ENCODE measurements at regions of chr9 and their contacts with region 1.

Region 1: GRCh38 chr9:104968025-104968982 is 40.3 kb upstream of the ABCA1 start:
- DNase-seq: peak; percentile 77 to 91 (median 88)
- ATAC-seq: peak; percentile 98
- H3K4me3 ChIP-seq: peak overlapping the region; percentile 80 to 86
- H3K4me3 Mint-ChIP-seq: peak overlapping the region; percentile 91
- H3K27ac ChIP-seq: peak overlapping the region; percentile 11 to 47
- H3K27ac Mint-ChIP-seq: peak overlapping the region; percentile 73
- H3K4me1 ChIP-seq: peaks cover 14% of the 10 kb centered on the region
- H3K4me1 Mint-ChIP-seq: peaks cover 13% of the 10 kb centered on the region
- H3K27me3 ChIP-seq: peaks cover 0 to 4% of the 10 kb centered on the region in 2 experiments
- H3K27me3 Mint-ChIP-seq: peaks cover 5% of the 10 kb centered on the region
- CTCF ChIP-seq: no peak

Region 2: GRCh38 chr9:104093647-104094533 is 874.4 kb before region 1 on chr9 and contains the start of gene SMC2:
- CTCF ChIA-PET with region 1: no interaction called
- POLR2A ChIA-PET with region 1: no interaction called
- intact Hi-C with region 1: loop called in 1 of 2 experiments (anchors 10 kb)
- DNase-seq: peak; percentile 90 to 96 (median 94)
- ATAC-seq: peak; percentile 96
- H3K4me3 ChIP-seq: peak within 1 kb of the TSS; percentile 58 to 79
- H3K4me3 Mint-ChIP-seq: peak within 1 kb of the TSS; percentile 98
- H3K27ac ChIP-seq: peak within 1 kb of the TSS; percentile 78 to 98
- H3K27ac Mint-ChIP-seq: peak within 1 kb of the TSS; percentile 98
- H3K4me1 ChIP-seq: peaks cover 21% of the 10 kb centered on the region
- H3K4me1 Mint-ChIP-seq: peaks cover 44% of the 10 kb centered on the region
- H3K27me3 ChIP-seq: no peaks in the 10 kb centered on the region
- H3K27me3 Mint-ChIP-seq: no peaks in the 10 kb centered on the region
- CTCF ChIP-seq: no peak
- total RNA-seq, gene SMC2: 1.9 to 2.0 TPM

Region 3: GRCh38 chr9:104927912-104928740 is 40.2 kb before region 1 on chr9 and contains the start of gene ABCA1:
- CTCF ChIA-PET with region 1: no interaction called
- POLR2A ChIA-PET with region 1: no interaction called
- intact Hi-C with region 1: loop called (anchors 1 kb)
- DNase-seq: peak; percentile 42 to 87 (median 65)
- ATAC-seq: peak; percentile 78
- H3K4me3 ChIP-seq: peak within 1 kb of the TSS; percentile 56 to 71
- H3K4me3 Mint-ChIP-seq: peak within 1 kb of the TSS; percentile 91
- H3K27ac ChIP-seq: no peak within 1 kb of the TSS
- H3K27ac Mint-ChIP-seq: peak within 1 kb of the TSS; percentile 80
- H3K4me1 ChIP-seq: peaks cover 19% of the 10 kb centered on the region
- H3K4me1 Mint-ChIP-seq: peaks cover 15% of the 10 kb centered on the region
- H3K27me3 ChIP-seq: peaks cover 0 to 24% of the 10 kb centered on the region in 2 experiments
- H3K27me3 Mint-ChIP-seq: peaks cover 11% of the 10 kb centered on the region
- CTCF ChIP-seq: no peak
- total RNA-seq, gene ABCA1: 11.2 to 11.4 TPM

Region 4: DNA sequence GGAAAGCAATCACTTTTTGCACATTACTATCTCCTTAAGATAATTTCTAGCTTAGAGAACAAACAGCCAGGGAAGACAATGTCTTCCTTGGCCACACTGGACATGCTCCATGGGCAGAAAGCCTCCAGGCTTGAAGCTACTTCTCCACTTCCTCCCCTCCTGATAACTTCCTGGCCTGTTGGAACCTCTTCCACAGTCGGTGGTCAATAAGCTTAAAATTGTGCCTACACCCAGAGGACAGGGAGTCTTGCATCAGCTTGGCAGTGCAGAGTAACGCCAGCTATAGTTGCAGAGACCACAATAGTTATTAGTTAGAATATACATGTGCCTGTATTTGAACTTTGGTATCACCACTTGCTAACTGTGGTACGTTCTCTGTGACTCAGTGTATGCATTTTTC is 17.8 kb after region 1 on chr9:
- CTCF ChIA-PET with region 1: no interaction called
- POLR2A ChIA-PET with region 1: no interaction called
- intact Hi-C with region 1: loop called (anchors 1 kb)
- DNase-seq: no peak
- ATAC-seq: no peak
- H3K4me3 ChIP-seq: no peak overlapping the region
- H3K4me3 Mint-ChIP-seq: no peak overlapping the region
- H3K27ac ChIP-seq: no peak overlapping the region
- H3K27ac Mint-ChIP-seq: no peak overlapping the region
- H3K4me1 ChIP-seq: peaks cover 26% of the 10 kb centered on the region
- H3K4me1 Mint-ChIP-seq: peaks cover 26% of the 10 kb centered on the region
- H3K27me3 ChIP-seq: peaks cover 0 to 2% of the 10 kb centered on the region in 2 experiments
- H3K27me3 Mint-ChIP-seq: peaks cover 6% of the 10 kb centered on the region
- CTCF ChIP-seq: no peak

Region 5: GRCh38 chr9:105168870-105169319 is 200.6 kb after region 1 on chr9:
- CTCF ChIA-PET with region 1: no interaction called
- POLR2A ChIA-PET with region 1: no interaction called
- intact Hi-C with region 1: no loop called
- DNase-seq: no peak
- ATAC-seq: no peak
- H3K4me3 ChIP-seq: no peak overlapping the region
- H3K4me3 Mint-ChIP-seq: no peak overlapping the region
- H3K27ac ChIP-seq: no peak overlapping the region
- H3K27ac Mint-ChIP-seq: no peak overlapping the region
- H3K4me1 ChIP-seq: no peaks in the 10 kb centered on the region
- H3K4me1 Mint-ChIP-seq: no peaks in the 10 kb centered on the region
- H3K27me3 ChIP-seq: no peaks in the 10 kb centered on the region
- H3K27me3 Mint-ChIP-seq: peaks cover 9% of the 10 kb centered on the region
- CTCF ChIP-seq: no peak